ENCODE measurements at regions of chr6 and their contacts with region 1.

Region 1: DNA sequence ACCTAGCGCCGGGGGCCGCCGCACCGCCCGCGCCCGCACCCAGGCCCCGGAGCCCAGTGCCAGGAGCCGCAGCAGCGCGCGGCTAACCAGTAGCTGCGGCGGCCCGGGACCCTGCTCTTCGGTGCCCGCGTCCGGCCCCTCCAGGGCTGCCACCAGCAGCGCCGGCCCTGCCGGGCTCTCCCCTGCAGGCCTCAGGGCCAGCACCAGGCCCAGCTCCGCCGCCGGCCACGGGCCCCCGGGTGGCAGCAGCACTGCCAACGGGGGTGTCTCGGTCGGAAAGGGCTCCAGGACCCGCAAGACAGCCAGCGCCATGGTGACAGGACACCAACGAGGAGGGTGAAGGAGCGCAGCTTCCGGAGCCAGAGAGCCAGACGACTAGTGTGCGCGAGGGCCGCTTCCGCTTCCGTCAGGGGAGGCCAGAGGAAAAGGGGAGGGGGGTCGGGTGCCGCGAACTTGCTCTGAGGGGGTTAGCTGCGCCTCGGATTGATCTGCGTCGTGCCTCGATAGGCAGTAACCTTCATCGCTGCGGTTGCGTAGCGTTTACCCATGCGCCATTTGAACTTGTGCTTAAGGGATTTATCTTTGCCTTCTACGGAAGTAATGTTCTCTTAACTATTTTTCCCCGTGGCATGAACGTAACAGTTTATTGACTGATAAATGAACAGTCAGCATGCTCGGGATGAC is at the start of gene PEX6:
- DNase-seq: peak; percentile 90 to 97 (median 94)
- H3K4me3 ChIP-seq: peak within 1 kb of the TSS; percentile 80
- H3K4me3 Mint-ChIP-seq: peak within 1 kb of the TSS; percentile 87 to 96 (median 94)
- H3K27ac ChIP-seq: peak within 1 kb of the TSS; percentile 79
- H3K27ac Mint-ChIP-seq: peak within 1 kb of the TSS; percentile 94 to 99 (median 97)
- H3K4me1 ChIP-seq: peaks cover 47% of the 10 kb centered on the region
- H3K4me1 Mint-ChIP-seq: peaks cover 36 to 61% (median 50%) of the 10 kb centered on the region in 3 donors
- H3K27me3 ChIP-seq: no peaks in the 10 kb centered on the region
- H3K27me3 Mint-ChIP-seq: no peaks in the 10 kb centered on the region
- total RNA-seq, gene PEX6: 19.2 to 20.6 TPM

Region 2: GRCh38 chr6:42796171-42796570 is 182.8 kb before region 1 on chr6:
- CTCF ChIA-PET with region 1: no interaction called
- POLR2A ChIA-PET with region 1: no interaction called
- DNase-seq: no peak
- H3K4me3 ChIP-seq: no peak overlapping the region
- H3K4me3 Mint-ChIP-seq: no peak overlapping the region
- H3K27ac ChIP-seq: no peak overlapping the region
- H3K27ac Mint-ChIP-seq: peak overlapping the region in 6 of 8 donors; percentile 1 to 74 (median 21)
- H3K4me1 ChIP-seq: peaks cover 4% of the 10 kb centered on the region
- H3K4me1 Mint-ChIP-seq: peaks cover 21 to 46% (median 27%) of the 10 kb centered on the region in 3 donors
- H3K27me3 ChIP-seq: no peaks in the 10 kb centered on the region
- H3K27me3 Mint-ChIP-seq: no peaks in the 10 kb centered on the region

Region 3: DNA sequence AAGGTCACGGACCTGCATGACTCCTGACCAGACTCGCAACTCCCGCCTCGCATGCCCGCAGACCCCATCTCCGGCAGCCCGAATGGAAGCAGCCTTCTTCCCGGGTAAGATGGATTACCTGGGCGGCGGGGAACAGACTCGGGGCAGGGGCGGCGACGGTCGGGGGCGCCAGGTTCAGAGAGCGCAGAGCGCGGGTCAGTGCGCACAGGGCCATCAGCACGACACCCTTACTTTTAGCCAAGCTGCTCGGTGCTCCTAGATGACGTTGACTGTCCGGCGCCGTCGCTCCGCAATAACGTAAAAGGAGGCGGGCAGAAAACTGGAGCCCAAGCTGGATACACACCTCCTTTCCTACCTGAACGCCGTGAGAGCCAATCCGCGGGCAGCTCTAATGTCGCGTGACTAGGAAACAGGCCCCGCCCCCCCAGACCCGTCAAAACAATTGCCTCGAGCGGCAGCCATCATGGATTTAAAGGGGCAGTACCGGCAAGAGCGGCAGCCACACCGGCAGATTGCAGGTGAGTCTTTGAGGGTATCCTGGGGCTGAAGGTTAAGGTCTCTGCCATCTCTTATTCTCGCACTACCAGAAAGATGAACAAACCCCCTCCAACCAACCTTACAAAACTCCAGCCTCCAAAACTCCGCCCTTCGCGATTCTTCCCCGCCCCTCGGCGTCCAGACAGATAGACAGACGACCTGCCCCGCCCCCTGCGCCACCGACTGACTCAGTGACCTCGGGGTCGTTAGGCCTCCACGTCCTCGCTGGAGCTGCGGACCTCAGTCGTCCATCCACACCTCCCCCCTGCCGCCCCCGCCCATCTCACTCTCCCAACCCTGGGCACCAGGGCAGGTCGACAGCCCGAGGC is 80.4 kb after region 1 on chr6 and contains the starts of genes KLC4 and MRPL2:
- CTCF ChIA-PET with region 1: interaction called, 3 read pairs
- POLR2A ChIA-PET with region 1: interaction called, 10 read pairs
- DNase-seq: peak; percentile 95 to 97 (median 96)
- H3K4me3 ChIP-seq: peak within 1 kb of the TSS; percentile 93
- H3K4me3 Mint-ChIP-seq: peak within 1 kb of the TSS; percentile 95 to 99 (median 98)
- H3K27ac ChIP-seq: peak within 1 kb of the TSS; percentile 94
- H3K27ac Mint-ChIP-seq: peak within 1 kb of the TSS; percentile 98 to 100 (median 100)
- H3K4me1 ChIP-seq: peaks cover 23% of the 10 kb centered on the region
- H3K4me1 Mint-ChIP-seq: peaks cover 32 to 54% (median 50%) of the 10 kb centered on the region in 3 donors
- H3K27me3 ChIP-seq: no peaks in the 10 kb centered on the region
- H3K27me3 Mint-ChIP-seq: no peaks in the 10 kb centered on the region
- total RNA-seq, gene KLC4: 11.1 to 12.3 TPM
- total RNA-seq, gene MRPL2: 89.6 to 91.6 TPM

Measured in CD8-positive, alpha-beta memory T cell (primary cell).